ENCODE measurements at regions of chr4 and their contacts with region 1.

Region 1: GRCh38 chr4:155667568-155668511 is 1.2 kb downstream of the GUCY1A1 start:
- DNase-seq: peak in 1 of 9 donors; percentile 32
- ATAC-seq: peak; percentile 60
- H3K4me3 ChIP-seq: no peak overlapping the region
- H3K4me3 Mint-ChIP-seq: peak overlapping the region in 9 of 10 donors; percentile 50 to 90 (median 78)
- H3K27ac ChIP-seq: no peak overlapping the region
- H3K27ac Mint-ChIP-seq: no peak overlapping the region
- H3K4me1 ChIP-seq: no peaks in the 10 kb centered on the region
- H3K4me1 Mint-ChIP-seq: peaks cover 6 to 25% (median 17%) of the 10 kb centered on the region in 7 donors
- H3K27me3 ChIP-seq: no peaks in the 10 kb centered on the region
- H3K27me3 Mint-ChIP-seq: peaks cover 47 to 76% (median 62%) of the 10 kb centered on the region in 5 donors

Region 2: GRCh38 chr4:154743683-154744340 is 924.0 kb before region 1 on chr4 and contains the start of gene LRAT:
- CTCF ChIA-PET with region 1: no interaction called
- POLR2A ChIA-PET with region 1: no interaction called
- intact Hi-C with region 1: loop called in 1 of 2 experiments (anchors 10 kb)
- DNase-seq: peak in 7 of 9 donors; percentile 0 to 45 (median 10)
- ATAC-seq: peak; percentile 78
- H3K4me3 ChIP-seq: peak within 1 kb of the TSS; percentile 30
- H3K4me3 Mint-ChIP-seq: peak within 1 kb of the TSS; percentile 82 to 92 (median 88)
- H3K27ac ChIP-seq: no peak within 1 kb of the TSS
- H3K27ac Mint-ChIP-seq: peak within 1 kb of the TSS in 1 of 9 donors; percentile 29
- H3K4me1 ChIP-seq: no peaks in the 10 kb centered on the region
- H3K4me1 Mint-ChIP-seq: peaks cover 11 to 38% (median 21%) of the 10 kb centered on the region in 7 donors
- H3K27me3 ChIP-seq: peaks cover 0 to 9% of the 10 kb centered on the region in 2 donors
- H3K27me3 Mint-ChIP-seq: peaks cover 78 to 90% (median 81%) of the 10 kb centered on the region in 5 donors
- total RNA-seq, gene LRAT: not detected

Region 3: DNA sequence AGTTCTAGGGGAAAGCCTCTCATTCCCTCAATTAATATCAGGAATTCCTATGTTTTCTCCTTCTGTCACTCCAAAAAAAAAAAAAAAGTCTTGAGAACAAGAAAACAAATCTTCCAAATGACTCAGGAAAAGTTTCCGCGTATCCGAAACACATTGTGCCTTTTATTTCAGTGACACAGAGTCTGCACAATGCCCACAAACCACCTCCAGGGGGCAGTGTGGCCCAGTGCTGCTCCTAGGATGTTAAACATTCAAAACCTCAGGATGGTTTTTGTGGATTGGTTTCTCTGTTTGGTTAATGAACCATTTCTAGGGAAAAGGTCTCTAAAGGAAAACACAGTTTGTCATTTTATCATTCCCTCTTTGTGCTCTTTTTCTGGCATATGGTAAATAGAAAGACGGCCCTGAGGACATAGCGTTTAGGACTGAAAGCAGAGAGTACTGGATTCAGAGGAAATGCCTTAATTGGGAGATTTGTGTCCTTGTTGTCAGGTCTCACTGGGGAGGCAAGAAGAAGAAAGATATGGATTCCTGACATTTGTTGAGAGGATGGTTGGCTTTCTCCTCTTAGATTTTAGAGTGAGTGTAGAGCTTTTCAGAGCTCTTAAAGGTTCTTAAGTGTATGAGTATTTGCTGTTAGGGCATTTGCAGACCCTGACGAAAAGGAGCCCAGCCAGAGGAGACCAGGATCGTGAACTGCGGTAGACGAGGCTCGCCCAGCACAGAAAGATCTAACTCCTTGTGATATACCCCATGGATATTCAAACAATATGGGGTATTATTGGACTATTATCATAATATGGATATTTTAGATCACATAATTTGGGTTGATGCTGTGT is 225.4 kb before region 1 on chr4:
- CTCF ChIA-PET with region 1: no interaction called
- POLR2A ChIA-PET with region 1: no interaction called
- intact Hi-C with region 1: loop called in 1 of 2 experiments (anchors 10 kb)
- DNase-seq: peak in 8 of 9 donors; percentile 10 to 67 (median 32)
- ATAC-seq: peak; percentile 82
- H3K4me3 ChIP-seq: no peak overlapping the region
- H3K4me3 Mint-ChIP-seq: peak overlapping the region in 3 of 10 donors; percentile 6 to 45 (median 20)
- H3K27ac ChIP-seq: no peak overlapping the region
- H3K27ac Mint-ChIP-seq: no peak overlapping the region
- H3K4me1 ChIP-seq: no peaks in the 10 kb centered on the region
- H3K4me1 Mint-ChIP-seq: peaks cover 0 to 3% (median 0%) of the 10 kb centered on the region in 7 donors
- H3K27me3 ChIP-seq: no peaks in the 10 kb centered on the region
- H3K27me3 Mint-ChIP-seq: peaks cover 16 to 28% (median 22%) of the 10 kb centered on the region in 5 donors

Region 4: GRCh38 chr4:156346959-156347385 is 679.1 kb after region 1 on chr4:
- CTCF ChIA-PET with region 1: no interaction called
- POLR2A ChIA-PET with region 1: no interaction called
- intact Hi-C with region 1: no loop called
- DNase-seq: no peak
- ATAC-seq: no peak
- H3K4me3 ChIP-seq: no peak overlapping the region
- H3K4me3 Mint-ChIP-seq: no peak overlapping the region
- H3K27ac ChIP-seq: no peak overlapping the region
- H3K27ac Mint-ChIP-seq: no peak overlapping the region
- H3K4me1 ChIP-seq: no peaks in the 10 kb centered on the region
- H3K4me1 Mint-ChIP-seq: no peaks in the 10 kb centered on the region
- H3K27me3 ChIP-seq: no peaks in the 10 kb centered on the region
- H3K27me3 Mint-ChIP-seq: no peaks in the 10 kb centered on the region

Measured in naive thymus-derived CD4-positive, alpha-beta T cell (primary cell).